Naive thymus-derived CD4-positive, alpha-beta T cell (primary cell): ENCODE measurements at regions of chr14 and their contacts with region 1.

Region 1: GRCh38 chr14:69398053-69398817 is at the starts of genes ERH and SLC39A9:
- DNase-seq: peak; percentile 78 to 97 (median 94)
- ATAC-seq: peak; percentile 93
- H3K4me3 ChIP-seq: peak within 1 kb of the TSS; percentile 81
- H3K4me3 Mint-ChIP-seq: peak within 1 kb of the TSS; percentile 89 to 100 (median 97)
- H3K27ac ChIP-seq: peak within 1 kb of the TSS; percentile 86
- H3K27ac Mint-ChIP-seq: peak within 1 kb of the TSS; percentile 98 to 100 (median 100)
- H3K4me1 ChIP-seq: peaks cover 31 to 52% of the 10 kb centered on the region in 2 donors
- H3K4me1 Mint-ChIP-seq: peaks cover 39 to 93% (median 73%) of the 10 kb centered on the region in 7 donors
- H3K27me3 ChIP-seq: no peaks in the 10 kb centered on the region
- H3K27me3 Mint-ChIP-seq: no peaks in the 10 kb centered on the region
- total RNA-seq, gene ERH: 85.1 to 330 (median 96.3) TPM
- total RNA-seq, gene SLC39A9: 27.2 to 50.3 (median 35.3) TPM

Region 2: DNA sequence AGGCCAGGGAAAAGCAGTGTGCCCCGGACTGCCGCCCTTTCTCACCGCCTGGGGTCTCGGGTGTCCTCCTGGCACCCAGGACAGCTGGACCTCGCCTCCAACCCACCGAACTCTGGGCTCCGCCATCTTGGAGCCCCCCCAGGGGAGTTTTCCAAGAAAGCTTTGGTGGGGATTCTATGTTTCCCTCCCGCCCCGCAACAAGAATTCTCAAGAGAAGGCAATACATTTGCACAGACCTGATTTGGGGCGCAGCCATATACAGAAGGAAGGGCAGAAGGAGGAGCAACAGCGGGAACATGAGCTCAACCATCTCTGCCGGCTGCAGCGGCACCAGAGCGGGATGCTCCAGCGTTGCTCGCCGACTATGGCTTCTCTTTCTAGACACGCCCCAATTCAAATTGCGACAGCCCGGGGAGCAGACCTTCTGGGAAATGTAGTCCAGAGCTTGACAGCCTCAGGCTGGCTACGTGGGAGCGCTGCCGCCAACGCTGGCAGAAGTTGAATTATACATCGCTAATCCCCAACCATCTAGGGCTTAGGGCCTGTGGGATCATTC is 1702.8 kb before region 1 on chr14 and contains the start of gene RDH11:
- CTCF ChIA-PET with region 1: no interaction called
- POLR2A ChIA-PET with region 1: no interaction called
- intact Hi-C with region 1: loop called in 1 of 2 experiments (anchors 1 kb)
- DNase-seq: peak; percentile 53 to 89 (median 82)
- ATAC-seq: peak; percentile 97
- H3K4me3 ChIP-seq: peak within 1 kb of the TSS; percentile 88
- H3K4me3 Mint-ChIP-seq: peak within 1 kb of the TSS; percentile 87 to 98 (median 92)
- H3K27ac ChIP-seq: peak within 1 kb of the TSS; percentile 75
- H3K27ac Mint-ChIP-seq: peak within 1 kb of the TSS; percentile 66 to 95 (median 87)
- H3K4me1 ChIP-seq: peaks cover 0 to 3% of the 10 kb centered on the region in 2 donors
- H3K4me1 Mint-ChIP-seq: peaks cover 12 to 32% (median 21%) of the 10 kb centered on the region in 7 donors
- H3K27me3 ChIP-seq: no peaks in the 10 kb centered on the region
- H3K27me3 Mint-ChIP-seq: no peaks in the 10 kb centered on the region
- total RNA-seq, gene RDH11: 22.3 to 44.5 (median 42.6) TPM

Region 3: DNA sequence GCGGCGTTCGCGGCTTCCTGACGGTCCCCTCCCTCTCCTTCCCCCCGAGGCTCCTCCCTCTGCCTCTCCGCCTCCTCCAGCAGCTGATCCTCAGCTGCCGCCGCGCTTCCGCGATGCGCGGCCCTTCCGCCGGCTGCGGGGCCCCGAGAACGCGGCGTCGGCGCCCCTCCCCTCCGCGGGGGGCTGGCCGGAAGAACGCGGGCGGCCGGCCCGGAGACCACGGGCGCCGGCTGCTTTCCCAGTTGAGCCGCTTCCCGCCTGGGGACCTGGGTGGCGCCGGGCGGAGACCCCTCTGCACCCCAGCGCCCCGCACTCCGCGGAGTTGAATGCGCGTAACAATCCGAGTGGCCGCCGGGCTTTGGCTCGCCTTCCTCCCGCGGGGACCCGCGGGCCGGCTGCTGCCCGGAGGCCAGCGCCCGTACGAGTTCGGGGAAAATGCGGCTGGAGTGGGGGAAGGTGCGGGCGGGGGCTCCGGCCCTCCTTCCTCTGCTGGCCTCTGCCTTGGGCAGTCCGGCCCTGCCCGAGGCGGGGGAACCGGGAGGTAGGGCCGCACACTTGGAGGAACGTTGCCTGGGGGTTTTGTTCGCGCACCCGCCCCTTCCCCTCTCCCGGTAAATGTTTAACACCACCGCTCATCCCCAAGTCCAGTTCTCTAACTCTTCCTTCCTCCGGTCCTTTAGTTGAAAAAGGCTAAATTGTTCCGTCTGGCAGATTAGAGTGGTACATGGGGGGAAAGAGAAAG is 244.9 kb before region 1 on chr14:
- CTCF ChIA-PET with region 1: interaction called, 3 read pairs
- POLR2A ChIA-PET with region 1: interaction called, 6 read pairs
- intact Hi-C with region 1: loop called (anchors 1 kb)
- DNase-seq: peak; percentile 76 to 96 (median 91)
- ATAC-seq: peak; percentile 94
- H3K4me3 ChIP-seq: peak overlapping the region; percentile 83
- H3K4me3 Mint-ChIP-seq: peak overlapping the region; percentile 89 to 100 (median 97)
- H3K27ac ChIP-seq: peak overlapping the region; percentile 90
- H3K27ac Mint-ChIP-seq: peak overlapping the region; percentile 84 to 98 (median 93)
- H3K4me1 ChIP-seq: peaks cover 11 to 12% of the 10 kb centered on the region in 2 donors
- H3K4me1 Mint-ChIP-seq: peaks cover 30 to 37% (median 36%) of the 10 kb centered on the region in 7 donors
- H3K27me3 ChIP-seq: no peaks in the 10 kb centered on the region
- H3K27me3 Mint-ChIP-seq: peaks cover 0 to 36% (median 0%) of the 10 kb centered on the region in 5 donors

Region 4: DNA sequence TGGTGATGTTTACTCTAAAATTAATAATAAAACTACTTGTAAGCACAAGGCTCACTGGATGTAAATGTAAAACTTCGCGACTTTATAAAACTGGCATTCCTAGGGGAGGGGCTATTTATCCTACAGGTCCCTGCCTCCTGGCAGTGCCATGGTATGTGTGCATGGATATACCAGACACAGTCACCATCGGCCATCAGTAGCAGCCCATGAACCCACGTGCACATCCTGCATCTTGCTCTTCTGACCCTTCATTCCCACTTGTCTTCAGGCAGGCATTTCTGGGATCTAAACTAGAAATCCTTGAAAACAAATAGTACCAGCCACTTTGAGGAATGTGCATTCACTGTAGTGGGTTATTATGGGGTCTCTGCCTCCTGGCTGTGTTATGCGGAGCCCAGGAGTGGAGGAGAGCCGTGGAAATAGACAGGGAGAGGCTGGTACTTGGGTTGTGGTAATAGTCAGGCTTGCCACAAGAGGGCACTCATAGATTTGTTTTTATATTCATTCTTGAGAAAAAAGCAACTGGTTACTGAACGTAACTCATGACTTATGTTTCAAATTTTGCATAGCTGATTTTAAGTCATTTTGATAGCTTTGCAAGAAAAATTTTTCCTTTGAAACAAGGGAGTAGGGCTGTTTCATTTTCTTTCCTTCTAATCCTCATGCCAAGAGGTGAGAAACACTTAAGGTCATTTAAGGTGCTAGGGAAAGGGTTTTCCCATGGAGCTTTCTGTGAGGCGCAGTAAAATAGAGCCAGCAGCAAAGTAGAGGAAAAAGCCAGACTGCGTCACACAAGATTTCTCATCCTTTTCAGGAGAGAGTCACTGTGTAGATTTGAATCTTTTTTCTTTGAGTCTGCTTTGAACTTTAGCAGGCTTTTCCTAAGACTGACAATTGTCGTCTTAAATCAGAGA is 155.7 kb before region 1 on chr14:
- CTCF ChIA-PET with region 1: no interaction called
- POLR2A ChIA-PET with region 1: interaction called, 3 read pairs
- intact Hi-C with region 1: loop called in 1 of 2 experiments (anchors 5 kb)
- DNase-seq: peak in 7 of 9 donors; percentile 23 to 61 (median 49)
- ATAC-seq: peak; percentile 78
- H3K4me3 ChIP-seq: no peak overlapping the region
- H3K4me3 Mint-ChIP-seq: no peak overlapping the region
- H3K27ac ChIP-seq: no peak overlapping the region
- H3K27ac Mint-ChIP-seq: peak overlapping the region in 1 of 9 donors; percentile 59
- H3K4me1 ChIP-seq: no peaks in the 10 kb centered on the region
- H3K4me1 Mint-ChIP-seq: peaks cover 0 to 4% (median 0%) of the 10 kb centered on the region in 7 donors
- H3K27me3 ChIP-seq: no peaks in the 10 kb centered on the region
- H3K27me3 Mint-ChIP-seq: no peaks in the 10 kb centered on the region

Region 5: DNA sequence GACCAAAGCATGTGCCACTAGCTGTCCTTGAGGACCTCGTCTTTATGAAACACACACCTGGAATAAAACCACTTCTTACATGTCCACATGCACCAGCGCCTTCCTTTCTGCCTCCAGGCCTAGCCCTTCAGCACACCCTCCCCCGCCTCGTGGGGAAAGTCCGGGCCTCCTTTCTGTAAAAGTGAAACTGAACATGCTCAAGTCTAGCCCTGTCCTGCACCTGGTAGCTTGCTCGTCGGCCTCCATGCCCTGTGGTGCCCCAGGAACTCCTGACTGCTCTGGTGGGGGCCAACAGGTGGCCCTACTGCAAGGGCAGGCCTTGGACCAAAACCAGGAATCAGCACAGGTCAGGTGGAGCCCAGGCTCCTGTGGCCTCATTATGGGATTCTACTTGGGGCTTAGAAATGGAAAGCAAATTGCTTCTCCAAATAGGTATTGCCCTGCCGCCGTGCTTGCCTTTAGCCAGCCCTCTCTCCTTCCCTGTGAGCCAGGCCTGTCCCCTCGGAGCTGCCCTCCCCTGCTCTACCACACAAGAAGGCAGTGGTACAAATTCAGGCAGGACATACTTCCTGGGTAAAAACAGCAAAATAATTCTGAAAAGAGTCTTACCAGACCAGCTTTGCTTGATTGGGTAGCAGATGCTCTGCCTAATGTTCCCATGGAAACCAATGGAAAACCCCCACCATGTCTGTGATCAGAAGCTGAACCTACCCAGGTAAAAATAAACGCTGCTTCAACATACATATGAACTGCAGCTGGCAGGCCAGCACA is 43.7 kb before region 1 on chr14:
- CTCF ChIA-PET with region 1: no interaction called
- POLR2A ChIA-PET with region 1: no interaction called
- intact Hi-C with region 1: loop called in 1 of 2 experiments (anchors 1 kb)
- DNase-seq: peak in 5 of 9 donors; percentile 11 to 72 (median 29)
- ATAC-seq: peak; percentile 83
- H3K4me3 ChIP-seq: peak overlapping the region; percentile 22
- H3K4me3 Mint-ChIP-seq: peak overlapping the region in 8 of 10 donors; percentile 10 to 87 (median 68)
- H3K27ac ChIP-seq: no peak overlapping the region
- H3K27ac Mint-ChIP-seq: peak overlapping the region; percentile 23 to 98 (median 74)
- H3K4me1 ChIP-seq: peaks cover 4 to 9% of the 10 kb centered on the region in 2 donors
- H3K4me1 Mint-ChIP-seq: peaks cover 6 to 27% (median 9%) of the 10 kb centered on the region in 7 donors
- H3K27me3 ChIP-seq: no peaks in the 10 kb centered on the region
- H3K27me3 Mint-ChIP-seq: peaks cover 0 to 14% (median 0%) of the 10 kb centered on the region in 5 donors

Region 6: DNA sequence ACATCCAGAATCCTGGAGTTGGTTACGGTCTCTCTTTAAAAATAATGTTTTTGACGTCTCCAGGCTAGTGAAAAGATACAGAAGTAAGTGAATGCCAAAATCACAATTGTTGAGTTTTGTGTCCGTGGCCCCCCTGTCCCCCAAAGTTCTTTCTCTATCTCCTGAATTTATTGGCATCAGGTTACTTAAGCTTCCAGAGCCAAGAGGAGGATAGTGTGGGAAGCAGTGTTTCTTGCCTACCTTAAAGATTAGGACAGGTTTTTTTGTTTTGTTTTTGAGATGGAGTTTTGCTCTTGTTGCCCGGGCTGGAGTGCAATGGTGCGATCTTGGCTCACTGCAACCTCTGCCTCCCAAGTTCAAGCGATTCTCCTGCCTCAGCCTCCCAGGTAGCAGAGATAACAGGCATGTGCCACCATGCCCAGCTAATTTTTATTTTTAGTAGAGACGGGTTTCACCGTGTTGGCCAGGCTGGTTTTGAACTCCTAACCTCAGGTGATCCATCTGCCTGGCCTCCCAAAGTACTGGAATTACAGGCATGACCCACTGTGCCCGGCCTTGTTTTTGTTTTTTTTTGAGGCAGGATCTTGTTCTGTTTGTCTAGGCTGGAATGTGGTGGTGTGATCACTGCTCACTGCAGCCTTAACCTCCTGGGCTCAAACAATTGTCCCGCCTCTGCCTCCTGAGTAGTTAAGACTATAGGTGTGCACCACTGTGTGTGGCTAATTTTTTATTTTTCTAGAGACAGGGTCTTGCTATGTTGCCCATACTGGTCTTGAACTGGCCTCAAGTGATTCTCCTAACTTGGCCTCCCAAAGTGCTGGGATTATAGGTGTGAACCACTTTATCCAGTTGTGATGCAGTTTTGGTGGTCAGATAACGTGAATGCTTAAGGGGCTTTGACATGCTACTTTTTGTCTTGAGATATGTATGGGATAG is 374.1 kb after region 1 on chr14:
- CTCF ChIA-PET with region 1: no interaction called
- POLR2A ChIA-PET with region 1: no interaction called
- intact Hi-C with region 1: loop called in 1 of 2 experiments (anchors 1 kb)
- DNase-seq: no peak
- ATAC-seq: no peak
- H3K4me3 ChIP-seq: no peak overlapping the region
- H3K4me3 Mint-ChIP-seq: peak overlapping the region in 6 of 10 donors; percentile 11 to 60 (median 36)
- H3K27ac ChIP-seq: no peak overlapping the region
- H3K27ac Mint-ChIP-seq: peak overlapping the region in 7 of 9 donors; percentile 6 to 90 (median 45)
- H3K4me1 ChIP-seq: peaks cover 34 to 51% of the 10 kb centered on the region in 2 donors
- H3K4me1 Mint-ChIP-seq: peaks cover 63 to 98% (median 92%) of the 10 kb centered on the region in 7 donors
- H3K27me3 ChIP-seq: no peaks in the 10 kb centered on the region
- H3K27me3 Mint-ChIP-seq: peaks cover 0 to 4% (median 0%) of the 10 kb centered on the region in 5 donors

Region 7: DNA sequence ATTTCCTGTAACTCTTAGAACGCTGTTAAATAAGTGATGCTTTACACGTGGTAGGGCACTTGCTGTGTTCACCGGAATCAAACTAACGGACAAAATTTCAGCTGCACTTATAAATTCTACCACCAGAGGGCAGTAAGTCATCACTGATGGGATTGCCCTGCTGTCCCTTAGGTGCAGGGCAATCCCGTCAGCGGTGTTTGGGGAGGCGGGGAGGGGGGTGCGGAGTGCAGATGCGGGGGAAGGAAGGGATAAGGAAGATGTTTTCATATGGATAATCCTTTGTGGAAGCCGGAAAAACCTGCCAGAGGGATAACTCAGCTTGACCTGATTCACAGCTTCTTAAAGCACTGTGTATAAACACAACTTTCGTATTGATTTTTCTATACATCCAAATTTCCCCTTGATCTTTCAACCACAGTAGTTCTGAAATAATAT is 420.5 kb after region 1 on chr14:
- CTCF ChIA-PET with region 1: no interaction called
- POLR2A ChIA-PET with region 1: no interaction called
- intact Hi-C with region 1: no loop called
- DNase-seq: peak; percentile 16 to 76 (median 53)
- ATAC-seq: peak; percentile 84
- H3K4me3 ChIP-seq: no peak overlapping the region
- H3K4me3 Mint-ChIP-seq: no peak overlapping the region
- H3K27ac ChIP-seq: no peak overlapping the region
- H3K27ac Mint-ChIP-seq: no peak overlapping the region
- H3K4me1 ChIP-seq: no peaks in the 10 kb centered on the region
- H3K4me1 Mint-ChIP-seq: peaks cover 0 to 4% (median 3%) of the 10 kb centered on the region in 7 donors
- H3K27me3 ChIP-seq: no peaks in the 10 kb centered on the region
- H3K27me3 Mint-ChIP-seq: peaks cover 0 to 8% (median 4%) of the 10 kb centered on the region in 5 donors